ENCODE measurements at regions of chr11 and their contacts with region 1.

Region 1: DNA sequence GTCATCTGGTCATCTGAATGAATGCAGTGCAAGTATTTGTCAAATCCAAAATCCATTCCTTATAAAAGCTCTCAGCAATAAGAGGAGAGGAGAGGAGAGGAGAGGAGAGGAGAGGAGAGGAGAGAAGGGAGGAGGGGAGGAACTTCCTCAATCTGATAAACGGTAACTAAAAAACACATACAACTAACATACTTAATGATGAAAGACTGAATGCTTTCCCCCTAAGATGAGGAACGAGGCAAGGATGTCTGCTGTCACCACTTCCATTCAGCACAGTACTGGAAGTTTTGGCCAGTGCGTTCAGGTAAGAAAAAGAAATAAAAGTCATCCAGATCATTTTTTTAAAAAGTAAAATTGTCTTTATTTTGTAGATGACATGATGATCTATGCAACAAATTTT is 80.4 kb downstream of the CD82 start:
- DNase-seq: no peak
- H3K4me3 ChIP-seq: no peak overlapping the region
- H3K27ac ChIP-seq: no peak overlapping the region
- H3K4me1 ChIP-seq: no peaks in the 10 kb centered on the region
- H3K27me3 ChIP-seq: no peaks in the 10 kb centered on the region
- CTCF ChIP-seq: no peak
- EP300 ChIP-seq: no peak
- POLR2A ChIP-seq: no peak

Region 2: DNA sequence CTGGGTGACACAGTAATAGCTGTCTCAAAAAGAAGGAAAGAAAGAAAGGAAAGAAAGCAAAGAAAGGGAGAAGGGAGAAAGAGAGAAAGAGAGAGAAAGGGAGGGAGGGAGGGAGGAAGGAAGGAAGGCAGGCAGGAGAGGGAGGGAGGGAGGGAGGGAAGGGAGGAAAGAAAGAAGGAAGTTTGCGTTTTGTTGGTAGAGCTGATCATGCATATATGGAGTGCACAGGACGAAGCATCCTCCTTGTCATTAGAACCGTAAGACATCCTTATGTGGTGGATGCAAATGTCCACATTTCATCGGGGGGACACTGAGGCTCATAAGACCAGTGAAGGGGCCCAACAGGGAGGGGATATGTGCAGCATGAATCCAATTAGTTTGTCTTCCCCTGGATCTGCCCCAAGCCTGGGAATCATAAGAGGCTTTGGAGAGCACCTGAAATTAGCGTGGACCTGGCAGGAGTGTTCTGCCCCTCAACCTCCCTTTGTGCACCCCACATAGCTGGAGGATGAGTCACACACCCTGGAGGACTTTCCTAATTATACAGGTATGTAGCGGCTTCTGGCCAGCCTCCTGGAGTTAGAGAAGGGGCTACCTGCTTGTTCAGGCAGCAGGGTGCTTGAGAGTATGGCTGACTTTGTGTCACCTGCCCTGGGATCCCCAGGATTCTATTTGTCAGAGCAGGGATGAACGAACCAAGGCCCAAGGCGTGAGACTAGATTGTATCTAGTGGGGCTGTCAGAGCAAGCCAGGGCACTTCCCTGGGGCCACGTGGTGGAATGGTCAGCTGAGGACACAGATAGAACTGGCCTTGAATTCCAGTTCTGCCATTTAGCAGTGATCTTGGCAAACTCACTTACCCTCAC is 200.1 kb before region 1 on chr11:
- intact Hi-C with region 1: no loop called
- DNase-seq: no peak
- H3K4me3 ChIP-seq: no peak overlapping the region
- H3K27ac ChIP-seq: no peak overlapping the region
- H3K4me1 ChIP-seq: no peaks in the 10 kb centered on the region
- H3K27me3 ChIP-seq: peaks cover 0 to 14% (median 0%) of the 10 kb centered on the region in 4 donors
- CTCF ChIP-seq: no peak
- EP300 ChIP-seq: no peak
- POLR2A ChIP-seq: no peak

Region 3: GRCh38 chr11:44698252-44698912 is 52.6 kb after region 1 on chr11:
- intact Hi-C with region 1: loop called (anchors 5 kb)
- DNase-seq: no peak
- H3K4me3 ChIP-seq: no peak overlapping the region
- H3K27ac ChIP-seq: no peak overlapping the region
- H3K4me1 ChIP-seq: peaks cover 13 to 24% (median 17%) of the 10 kb centered on the region in 4 donors
- H3K27me3 ChIP-seq: no peaks in the 10 kb centered on the region
- CTCF ChIP-seq: no peak
- EP300 ChIP-seq: no peak
- POLR2A ChIP-seq: no peak